ENCODE measurements at regions of chr3 and their contacts with region 1.

Region 1: DNA sequence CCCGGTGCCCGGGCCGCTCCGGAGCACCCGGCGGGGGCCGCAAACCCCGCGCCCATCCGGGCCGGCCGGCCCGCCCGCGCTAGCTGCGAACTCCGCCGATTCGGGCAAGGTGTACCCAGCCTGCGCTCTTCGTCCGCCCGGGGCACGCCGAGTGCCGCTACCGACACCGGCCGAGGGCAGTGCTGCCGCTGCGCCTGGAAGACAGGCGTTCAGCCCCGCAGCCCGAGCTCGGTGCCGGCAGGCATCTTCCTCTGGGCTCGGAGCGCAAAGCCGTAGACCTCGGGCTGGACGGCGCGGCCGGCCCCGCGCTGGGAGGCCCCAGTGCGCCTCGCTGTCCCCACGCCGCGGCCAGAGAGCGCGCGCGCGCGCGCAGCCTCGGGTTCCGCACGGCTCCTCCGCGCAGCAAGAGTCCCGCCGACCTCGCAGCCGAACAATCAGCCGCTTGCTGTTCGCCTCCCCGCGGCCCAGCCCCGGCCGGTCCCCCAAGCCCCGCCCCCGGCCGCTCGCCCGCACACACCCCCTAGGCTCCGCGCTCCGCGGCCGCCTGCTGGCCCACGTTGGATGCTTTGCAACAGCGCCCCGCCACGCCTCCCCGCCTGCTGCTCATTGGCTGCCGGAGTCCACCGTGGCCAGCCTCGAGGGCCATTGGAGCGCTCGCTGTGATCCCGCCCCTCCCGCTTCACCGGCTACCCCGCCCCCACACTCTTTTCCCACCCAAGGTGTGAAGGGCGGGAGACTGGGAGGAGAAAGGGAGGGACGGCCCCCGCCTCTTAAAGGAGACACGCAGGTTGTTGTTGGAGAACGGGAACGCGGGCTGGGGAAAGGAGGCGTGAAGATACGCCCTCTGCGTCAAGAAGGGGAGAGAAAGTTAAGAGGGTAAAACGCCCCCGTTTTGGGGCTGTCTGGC is at the start of gene LRIG1:
- DNase-seq: peak; percentile 91
- ATAC-seq: peak; percentile 96
- H3K4me3 Mint-ChIP-seq: peak within 1 kb of the TSS; percentile 83
- H3K27ac Mint-ChIP-seq: peak within 1 kb of the TSS; percentile 50
- H3K4me1 Mint-ChIP-seq: peaks cover 23% of the 10 kb centered on the region
- H3K27me3 Mint-ChIP-seq: peaks cover 37% of the 10 kb centered on the region
- CTCF ChIP-seq: no peak
- total RNA-seq, gene LRIG1: 9.4 and 9.7 TPM in 2 replicates

Region 2: DNA sequence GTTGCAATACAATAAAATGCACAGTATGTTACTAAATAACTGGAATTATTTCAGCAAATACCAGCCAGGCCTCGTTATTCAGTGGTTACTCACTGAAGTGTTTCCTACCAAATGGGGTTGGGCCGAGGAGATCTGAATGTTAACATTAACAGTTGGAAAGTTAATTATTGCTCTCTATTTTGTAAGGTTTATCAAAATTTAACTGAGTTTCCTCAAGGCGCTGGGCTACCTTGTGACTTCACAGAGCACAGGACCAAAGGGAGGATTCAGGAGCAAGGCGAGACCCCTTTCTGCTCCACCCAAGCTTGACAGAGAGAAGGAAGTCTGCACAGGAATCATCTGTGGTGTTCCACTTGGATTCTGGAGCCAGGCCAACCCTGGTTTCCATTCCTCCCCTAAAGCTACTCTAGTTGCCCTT is 1834.6 kb before region 1 on chr3:
- CTCF ChIA-PET with region 1: no interaction called
- POLR2A ChIA-PET with region 1: no interaction called
- intact Hi-C with region 1: no loop called
- DNase-seq: no peak
- ATAC-seq: no peak
- H3K4me3 Mint-ChIP-seq: no peak overlapping the region
- H3K27ac Mint-ChIP-seq: no peak overlapping the region
- H3K4me1 Mint-ChIP-seq: no peaks in the 10 kb centered on the region
- H3K27me3 Mint-ChIP-seq: peaks cover 2% of the 10 kb centered on the region
- CTCF ChIP-seq: no peak

Region 3: GRCh38 chr3:66220602-66221377 is 280.0 kb before region 1 on chr3 and contains the start of gene SLC25A26:
- CTCF ChIA-PET with region 1: no interaction called
- POLR2A ChIA-PET with region 1: no interaction called
- intact Hi-C with region 1: loop called (anchors 1 kb)
- DNase-seq: peak; percentile 90
- ATAC-seq: peak; percentile 96
- H3K4me3 Mint-ChIP-seq: peak within 1 kb of the TSS; percentile 98
- H3K27ac Mint-ChIP-seq: peak within 1 kb of the TSS; percentile 93
- H3K4me1 Mint-ChIP-seq: peaks cover 40% of the 10 kb centered on the region
- H3K27me3 Mint-ChIP-seq: peaks cover 3% of the 10 kb centered on the region
- CTCF ChIP-seq: no peak
- total RNA-seq, gene SLC25A26: 20.8 and 23.2 TPM in 2 replicates

Region 4: DNA sequence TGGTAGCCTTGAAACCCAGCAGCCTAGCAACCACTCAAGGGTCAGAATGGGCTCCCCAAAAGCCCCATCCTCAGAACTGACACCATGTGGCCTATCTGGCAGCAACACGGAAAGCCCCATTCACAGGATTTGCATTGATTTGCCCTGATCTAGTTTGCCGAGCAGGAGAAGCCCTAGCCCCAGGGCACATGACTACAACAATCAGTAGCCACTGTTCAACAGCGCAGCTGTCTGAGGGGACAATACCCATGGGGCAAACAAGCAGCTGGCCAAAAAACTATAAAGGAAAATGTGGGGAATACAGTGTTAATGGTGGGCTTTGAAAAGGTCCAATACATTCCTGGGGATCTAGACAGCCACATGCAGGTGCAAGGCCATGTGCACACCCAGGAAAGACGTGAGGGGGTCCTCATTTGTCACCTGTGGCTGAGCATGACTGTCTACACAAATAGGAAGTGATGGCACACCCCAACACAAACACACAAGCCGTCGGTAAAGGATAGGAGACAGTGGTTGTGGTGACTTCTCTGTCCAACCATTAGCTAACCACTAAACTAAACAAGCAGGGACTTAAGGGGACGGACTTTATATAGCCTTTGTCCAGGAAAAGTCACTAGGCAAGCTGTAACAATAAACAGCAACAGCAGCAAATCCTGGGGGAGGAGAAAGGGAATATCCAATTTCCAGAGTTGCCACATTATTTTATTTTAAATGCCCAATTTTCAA is 113.7 kb before region 1 on chr3:
- CTCF ChIA-PET with region 1: no interaction called
- POLR2A ChIA-PET with region 1: no interaction called
- intact Hi-C with region 1: loop called (anchors 2 kb)
- DNase-seq: no peak
- ATAC-seq: peak; percentile 76
- H3K4me3 Mint-ChIP-seq: peak overlapping the region; percentile 69
- H3K27ac Mint-ChIP-seq: peak overlapping the region; percentile 89
- H3K4me1 Mint-ChIP-seq: peaks cover 63% of the 10 kb centered on the region
- H3K27me3 Mint-ChIP-seq: no peaks in the 10 kb centered on the region
- CTCF ChIP-seq: no peak

Region 5: GRCh38 chr3:66441129-66441528 is 59.7 kb before region 1 on chr3:
- CTCF ChIA-PET with region 1: no interaction called
- POLR2A ChIA-PET with region 1: no interaction called
- intact Hi-C with region 1: loop called (anchors 2 kb)
- DNase-seq: no peak
- ATAC-seq: no peak
- H3K4me3 Mint-ChIP-seq: no peak overlapping the region
- H3K27ac Mint-ChIP-seq: no peak overlapping the region
- H3K4me1 Mint-ChIP-seq: peaks cover 8% of the 10 kb centered on the region
- H3K27me3 Mint-ChIP-seq: no peaks in the 10 kb centered on the region
- CTCF ChIP-seq: no peak

Region 6: DNA sequence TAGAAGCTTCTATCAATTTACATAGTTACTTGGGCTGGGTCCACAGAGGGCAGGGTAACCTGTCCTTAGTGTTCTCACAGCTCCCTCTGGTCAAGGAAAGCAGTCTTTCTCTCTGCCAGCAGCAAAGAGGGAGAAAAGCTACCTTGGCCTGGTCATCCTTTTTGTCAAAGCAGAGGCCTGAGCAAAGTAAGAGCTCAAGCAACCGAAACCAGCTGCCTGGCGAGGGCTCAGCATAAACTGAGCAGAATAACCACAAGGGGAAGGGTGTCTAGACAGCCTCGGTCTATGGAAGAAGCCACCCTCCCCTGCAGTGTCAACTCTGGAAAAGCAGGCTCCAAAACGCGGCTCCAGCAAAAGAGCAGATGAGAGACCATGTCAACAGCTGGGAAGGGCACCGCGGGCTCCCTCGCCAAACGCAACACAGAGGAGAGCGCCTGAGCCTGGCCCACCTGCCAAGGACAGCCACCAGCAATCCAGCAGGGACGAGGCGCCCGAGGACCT is 17.4 kb before region 1 on chr3:
- CTCF ChIA-PET with region 1: no interaction called
- POLR2A ChIA-PET with region 1: interaction called, 3 read pairs
- intact Hi-C with region 1: loop called (anchors 1 kb)
- DNase-seq: no peak
- ATAC-seq: peak; percentile 55
- H3K4me3 Mint-ChIP-seq: no peak overlapping the region
- H3K27ac Mint-ChIP-seq: no peak overlapping the region
- H3K4me1 Mint-ChIP-seq: peaks cover 47% of the 10 kb centered on the region
- H3K27me3 Mint-ChIP-seq: peaks cover 2% of the 10 kb centered on the region
- CTCF ChIP-seq: no peak

Region 7: GRCh38 chr3:66816090-66816761 is 315.4 kb after region 1 on chr3:
- CTCF ChIA-PET with region 1: no interaction called
- POLR2A ChIA-PET with region 1: no interaction called
- intact Hi-C with region 1: loop called (anchors 1 kb)
- DNase-seq: no peak
- ATAC-seq: peak; percentile 56
- H3K4me3 Mint-ChIP-seq: no peak overlapping the region
- H3K27ac Mint-ChIP-seq: no peak overlapping the region
- H3K4me1 Mint-ChIP-seq: no peaks in the 10 kb centered on the region
- H3K27me3 Mint-ChIP-seq: peaks cover 5% of the 10 kb centered on the region
- CTCF ChIP-seq: peak; percentile 78

Region 8: DNA sequence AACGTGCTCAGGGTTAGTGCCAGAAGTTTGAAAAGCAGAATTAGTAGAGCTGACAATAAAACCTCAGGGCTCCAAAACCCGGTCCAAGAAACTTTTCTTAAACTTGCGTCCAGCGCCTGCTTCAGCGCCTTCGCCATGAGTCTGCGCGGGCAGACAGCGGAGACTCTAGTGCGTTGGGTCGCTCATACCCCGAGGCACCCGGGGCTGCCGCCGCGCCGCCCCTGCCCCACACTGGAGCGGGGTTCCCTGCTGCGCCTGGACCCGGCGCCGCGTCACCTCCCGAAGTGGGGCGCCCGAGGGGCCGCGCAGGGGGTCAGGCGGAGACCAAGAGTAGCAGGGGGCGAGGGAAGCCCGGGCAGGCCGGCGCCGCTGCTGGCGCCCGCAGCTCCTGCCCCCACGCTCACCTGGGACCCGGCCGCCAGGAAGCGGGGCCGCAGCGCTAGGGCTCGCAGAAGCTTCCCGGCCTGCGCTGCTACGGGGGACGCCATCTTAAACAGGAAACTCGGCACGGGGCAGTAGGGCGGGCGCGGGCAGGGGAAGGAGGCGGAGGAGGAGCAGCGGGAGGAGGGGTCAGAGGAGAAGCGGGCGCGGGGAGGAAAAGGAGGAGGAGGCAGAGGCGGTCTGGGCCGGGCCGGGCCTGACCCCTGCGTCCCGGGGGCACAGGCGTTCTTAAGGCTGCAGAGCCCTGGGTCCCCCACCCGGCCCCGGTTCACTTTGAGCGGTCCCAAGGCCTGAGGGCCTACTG is 1153.4 kb after region 1 on chr3 and contains the start of gene SUCLG2:
- CTCF ChIA-PET with region 1: no interaction called
- POLR2A ChIA-PET with region 1: no interaction called
- intact Hi-C with region 1: loop called (anchors 10 kb)
- DNase-seq: peak; percentile 80
- ATAC-seq: peak; percentile 83
- H3K4me3 Mint-ChIP-seq: peak within 1 kb of the TSS; percentile 86
- H3K27ac Mint-ChIP-seq: peak within 1 kb of the TSS; percentile 87
- H3K4me1 Mint-ChIP-seq: peaks cover 63% of the 10 kb centered on the region
- H3K27me3 Mint-ChIP-seq: no peaks in the 10 kb centered on the region
- CTCF ChIP-seq: no peak
- total RNA-seq, gene SUCLG2: 38.9 and 40.8 TPM in 2 replicates